CD8-positive, alpha-beta T cell (primary cell): ENCODE measurements at regions of chr9 and their contacts with region 1.

Region 1: DNA sequence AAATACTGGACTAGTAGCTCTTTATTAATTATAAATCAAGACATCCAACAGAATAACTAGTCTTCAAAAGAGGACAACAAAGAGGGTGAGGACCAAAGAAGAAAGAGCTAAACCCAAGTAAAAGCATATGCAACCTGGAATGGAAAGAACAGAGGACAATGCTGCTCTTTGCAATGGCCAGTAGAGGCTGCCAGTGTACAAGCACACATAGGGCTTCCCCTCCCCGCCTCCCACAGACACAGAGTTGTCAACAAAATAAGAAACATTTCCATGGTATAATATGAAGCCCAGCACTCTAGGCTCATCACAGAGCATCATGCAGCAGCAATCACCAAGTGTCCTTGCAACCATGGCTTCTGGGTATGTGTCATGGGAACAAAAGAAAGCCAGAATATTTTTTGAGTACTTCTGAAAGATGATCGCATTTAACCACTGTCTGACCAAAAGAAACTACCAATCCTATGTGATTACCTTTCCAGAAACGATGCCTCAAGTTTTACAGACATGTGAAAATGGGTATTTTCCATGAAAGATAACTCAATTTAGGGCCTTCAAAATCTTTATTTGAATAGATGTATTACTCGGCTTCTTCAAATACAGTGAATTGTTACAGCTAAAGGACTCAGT is 58.1 kb downstream of the RFX3 start:
- DNase-seq: peak; percentile 13 to 80 (median 62)
- ATAC-seq: peak; percentile 99
- H3K4me3 ChIP-seq: no peak overlapping the region
- H3K4me3 Mint-ChIP-seq: no peak overlapping the region
- H3K27ac ChIP-seq: no peak overlapping the region
- H3K27ac Mint-ChIP-seq: no peak overlapping the region
- H3K4me1 ChIP-seq: peaks cover 4% of the 10 kb centered on the region
- H3K4me1 Mint-ChIP-seq: peaks cover 10% of the 10 kb centered on the region
- H3K27me3 ChIP-seq: no peaks in the 10 kb centered on the region
- H3K27me3 Mint-ChIP-seq: no peaks in the 10 kb centered on the region
- CTCF ChIP-seq: peak; percentile 87

Region 2: DNA sequence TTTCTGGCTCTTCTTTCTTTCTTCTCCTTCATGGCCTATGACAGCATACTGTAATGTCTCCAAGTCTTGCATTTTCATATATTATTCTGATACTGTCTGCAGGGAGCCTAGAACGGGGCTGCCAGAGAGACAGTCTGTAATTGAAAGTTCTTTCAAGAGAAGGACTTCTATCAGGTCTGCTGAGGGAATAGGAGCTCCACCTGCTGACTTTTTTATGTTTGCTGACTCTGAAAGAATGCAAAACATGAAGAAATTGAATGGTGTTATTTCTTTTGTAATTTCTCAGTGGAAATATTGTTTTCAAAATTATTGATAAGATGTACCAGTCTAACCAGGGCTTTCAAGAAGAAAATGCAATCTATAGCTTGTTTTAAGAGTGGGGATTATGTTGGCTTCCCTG is 179.9 kb after region 1 on chr9:
- CTCF ChIA-PET with region 1: interaction called, 11 read pairs
- POLR2A ChIA-PET with region 1: no interaction called
- intact Hi-C with region 1: loop called (anchors 1 to 5 kb)
- DNase-seq: peak in 2 of 9 experiments; percentile 9 to 24
- ATAC-seq: no peak
- H3K4me3 ChIP-seq: no peak overlapping the region
- H3K4me3 Mint-ChIP-seq: no peak overlapping the region
- H3K27ac ChIP-seq: no peak overlapping the region
- H3K27ac Mint-ChIP-seq: no peak overlapping the region
- H3K4me1 ChIP-seq: no peaks in the 10 kb centered on the region
- H3K4me1 Mint-ChIP-seq: no peaks in the 10 kb centered on the region
- H3K27me3 ChIP-seq: no peaks in the 10 kb centered on the region
- H3K27me3 Mint-ChIP-seq: no peaks in the 10 kb centered on the region
- CTCF ChIP-seq: no peak

Region 3: GRCh38 chr9:3719286-3719685 is 251.6 kb after region 1 on chr9:
- CTCF ChIA-PET with region 1: no interaction called
- POLR2A ChIA-PET with region 1: no interaction called
- intact Hi-C with region 1: loop called in 1 of 2 experiments (anchors 10 kb)
- DNase-seq: no peak
- ATAC-seq: no peak
- H3K4me3 ChIP-seq: no peak overlapping the region
- H3K4me3 Mint-ChIP-seq: no peak overlapping the region
- H3K27ac ChIP-seq: no peak overlapping the region
- H3K27ac Mint-ChIP-seq: no peak overlapping the region
- H3K4me1 ChIP-seq: no peaks in the 10 kb centered on the region
- H3K4me1 Mint-ChIP-seq: no peaks in the 10 kb centered on the region
- H3K27me3 ChIP-seq: no peaks in the 10 kb centered on the region
- H3K27me3 Mint-ChIP-seq: peaks cover 4% of the 10 kb centered on the region
- CTCF ChIP-seq: no peak

Region 4: GRCh38 chr9:3732077-3733038 is 264.7 kb after region 1 on chr9:
- CTCF ChIA-PET with region 1: interaction called, 4 read pairs
- POLR2A ChIA-PET with region 1: no interaction called
- intact Hi-C with region 1: loop called in 1 of 2 experiments (anchors 5 kb)
- DNase-seq: peak in 6 of 9 experiments; percentile 1 to 67 (median 18)
- ATAC-seq: peak; percentile 97
- H3K4me3 ChIP-seq: no peak overlapping the region
- H3K4me3 Mint-ChIP-seq: peak overlapping the region; percentile 42
- H3K27ac ChIP-seq: no peak overlapping the region
- H3K27ac Mint-ChIP-seq: no peak overlapping the region
- H3K4me1 ChIP-seq: no peaks in the 10 kb centered on the region
- H3K4me1 Mint-ChIP-seq: peaks cover 12% of the 10 kb centered on the region
- H3K27me3 ChIP-seq: no peaks in the 10 kb centered on the region
- H3K27me3 Mint-ChIP-seq: peaks cover 2% of the 10 kb centered on the region
- CTCF ChIP-seq: peak; percentile 52

Region 5: GRCh38 chr9:4117835-4118610 is 650.3 kb after region 1 on chr9:
- CTCF ChIA-PET with region 1: interaction called, 4 read pairs
- POLR2A ChIA-PET with region 1: no interaction called
- intact Hi-C with region 1: loop called (anchors 5 kb)
- DNase-seq: peak in 6 of 9 experiments; percentile 3 to 62 (median 42)
- ATAC-seq: no peak
- H3K4me3 ChIP-seq: no peak overlapping the region
- H3K4me3 Mint-ChIP-seq: no peak overlapping the region
- H3K27ac ChIP-seq: no peak overlapping the region
- H3K27ac Mint-ChIP-seq: no peak overlapping the region
- H3K4me1 ChIP-seq: no peaks in the 10 kb centered on the region
- H3K4me1 Mint-ChIP-seq: no peaks in the 10 kb centered on the region
- H3K27me3 ChIP-seq: no peaks in the 10 kb centered on the region
- H3K27me3 Mint-ChIP-seq: no peaks in the 10 kb centered on the region
- CTCF ChIP-seq: peak; percentile 25

Region 6: GRCh38 chr9:4375424-4376200 is 907.9 kb after region 1 on chr9:
- CTCF ChIA-PET with region 1: no interaction called
- POLR2A ChIA-PET with region 1: no interaction called
- intact Hi-C with region 1: loop called in 1 of 2 experiments (anchors 2 kb)
- DNase-seq: peak in 2 of 9 experiments; percentile 40 to 55
- ATAC-seq: peak; percentile 54
- H3K4me3 ChIP-seq: no peak overlapping the region
- H3K4me3 Mint-ChIP-seq: no peak overlapping the region
- H3K27ac ChIP-seq: no peak overlapping the region
- H3K27ac Mint-ChIP-seq: no peak overlapping the region
- H3K4me1 ChIP-seq: no peaks in the 10 kb centered on the region
- H3K4me1 Mint-ChIP-seq: no peaks in the 10 kb centered on the region
- H3K27me3 ChIP-seq: peaks cover 0 to 2% of the 10 kb centered on the region in 2 experiments
- H3K27me3 Mint-ChIP-seq: peaks cover 10% of the 10 kb centered on the region
- CTCF ChIP-seq: no peak